ENCODE measurements at regions of chr2 and their contacts with region 1.

Region 1: GRCh38 chr2:191150600-191151330 is at the start of gene STAT4:
- DNase-seq: peak; percentile 96
- ATAC-seq: peak; percentile 86
- H3K4me3 Mint-ChIP-seq: peak within 1 kb of the TSS; percentile 86
- H3K27ac Mint-ChIP-seq: peak within 1 kb of the TSS; percentile 87
- H3K4me1 Mint-ChIP-seq: peaks cover 68% of the 10 kb centered on the region
- H3K27me3 Mint-ChIP-seq: no peaks in the 10 kb centered on the region
- CTCF ChIP-seq: no peak
- total RNA-seq, gene STAT4: 70.8 to 72.2 TPM

Region 2: DNA sequence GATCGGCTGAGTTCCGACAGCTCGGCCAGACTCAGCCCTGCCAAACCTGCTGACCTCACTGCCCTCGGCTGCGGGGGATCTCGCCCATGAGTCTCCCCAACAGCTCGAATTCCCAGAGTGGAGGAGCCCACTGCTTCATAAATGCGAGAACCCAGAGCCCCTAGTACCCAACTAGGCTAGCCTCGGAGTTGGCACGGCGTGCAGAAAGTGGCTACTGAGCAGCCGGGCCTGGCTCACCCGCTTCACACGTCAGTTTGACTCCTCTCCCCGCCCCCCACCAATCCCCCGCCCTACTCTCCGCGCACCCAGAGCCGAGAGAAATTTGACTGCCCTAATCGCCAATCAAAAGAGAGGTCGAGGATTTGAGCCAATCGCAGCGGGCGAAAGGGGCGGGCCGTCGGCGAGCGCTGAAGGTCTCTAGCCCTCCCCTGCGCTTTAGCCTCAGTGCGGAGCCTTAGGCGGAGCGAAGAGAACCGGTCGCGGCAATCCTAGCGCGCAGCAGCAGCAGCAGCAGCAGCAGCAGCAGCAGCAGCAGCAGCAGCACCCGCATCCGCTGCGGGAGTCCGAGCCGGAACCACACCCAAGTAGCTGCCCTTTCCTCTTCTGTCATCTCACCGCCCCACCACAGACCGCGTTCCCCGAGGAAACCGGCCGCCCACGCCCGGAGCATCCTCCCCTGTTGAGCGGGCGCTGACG is 270.2 kb before region 1 on chr2 and contains the start of gene GLS:
- CTCF ChIA-PET with region 1: interaction called, 3 read pairs
- POLR2A ChIA-PET with region 1: interaction called, 8 read pairs
- intact Hi-C with region 1: loop called (anchors 5 kb)
- DNase-seq: peak; percentile 97
- ATAC-seq: peak; percentile 81
- H3K4me3 Mint-ChIP-seq: peak within 1 kb of the TSS; percentile 94
- H3K27ac Mint-ChIP-seq: peak within 1 kb of the TSS; percentile 99
- H3K4me1 Mint-ChIP-seq: peaks cover 36% of the 10 kb centered on the region
- H3K27me3 Mint-ChIP-seq: no peaks in the 10 kb centered on the region
- CTCF ChIP-seq: no peak
- total RNA-seq, gene GLS: 218 to 227 TPM

Region 3: DNA sequence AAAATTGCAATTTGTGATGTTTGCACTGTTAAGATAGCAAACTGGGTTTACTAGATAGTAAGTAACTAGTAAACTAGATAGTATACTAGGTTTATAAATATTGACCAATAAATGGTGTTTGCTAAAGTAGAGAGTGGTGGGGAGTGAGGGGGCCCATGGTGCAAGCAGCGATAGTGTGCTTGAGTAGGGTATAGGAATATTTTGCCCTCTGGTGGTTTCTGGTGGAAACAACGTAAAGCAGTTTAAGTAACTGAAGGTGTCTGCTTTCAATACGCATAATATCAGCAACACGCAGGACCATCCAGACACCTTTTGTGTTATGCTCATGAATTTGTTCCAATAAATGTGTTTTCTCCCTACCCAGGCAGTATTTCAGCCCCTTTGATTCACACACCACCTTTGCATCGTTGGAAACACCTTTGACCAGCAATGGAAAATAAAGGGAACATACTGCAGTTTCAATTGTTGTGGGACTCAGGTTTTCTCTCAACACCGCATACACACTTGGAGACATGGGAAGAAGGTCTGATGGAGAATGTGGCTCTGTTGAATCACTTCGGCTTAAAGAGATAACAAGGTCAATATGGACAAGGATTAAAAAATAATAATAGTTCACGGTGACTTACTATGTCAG is 120.1 kb before region 1 on chr2:
- CTCF ChIA-PET with region 1: interaction called, 17 read pairs
- POLR2A ChIA-PET with region 1: interaction called, 3 read pairs
- intact Hi-C with region 1: no loop called
- DNase-seq: peak; percentile 59
- ATAC-seq: peak; percentile 78
- H3K4me3 Mint-ChIP-seq: no peak overlapping the region
- H3K27ac Mint-ChIP-seq: peak overlapping the region; percentile 66
- H3K4me1 Mint-ChIP-seq: peaks cover 45% of the 10 kb centered on the region
- H3K27me3 Mint-ChIP-seq: no peaks in the 10 kb centered on the region
- CTCF ChIP-seq: peak; percentile 73

Region 4: DNA sequence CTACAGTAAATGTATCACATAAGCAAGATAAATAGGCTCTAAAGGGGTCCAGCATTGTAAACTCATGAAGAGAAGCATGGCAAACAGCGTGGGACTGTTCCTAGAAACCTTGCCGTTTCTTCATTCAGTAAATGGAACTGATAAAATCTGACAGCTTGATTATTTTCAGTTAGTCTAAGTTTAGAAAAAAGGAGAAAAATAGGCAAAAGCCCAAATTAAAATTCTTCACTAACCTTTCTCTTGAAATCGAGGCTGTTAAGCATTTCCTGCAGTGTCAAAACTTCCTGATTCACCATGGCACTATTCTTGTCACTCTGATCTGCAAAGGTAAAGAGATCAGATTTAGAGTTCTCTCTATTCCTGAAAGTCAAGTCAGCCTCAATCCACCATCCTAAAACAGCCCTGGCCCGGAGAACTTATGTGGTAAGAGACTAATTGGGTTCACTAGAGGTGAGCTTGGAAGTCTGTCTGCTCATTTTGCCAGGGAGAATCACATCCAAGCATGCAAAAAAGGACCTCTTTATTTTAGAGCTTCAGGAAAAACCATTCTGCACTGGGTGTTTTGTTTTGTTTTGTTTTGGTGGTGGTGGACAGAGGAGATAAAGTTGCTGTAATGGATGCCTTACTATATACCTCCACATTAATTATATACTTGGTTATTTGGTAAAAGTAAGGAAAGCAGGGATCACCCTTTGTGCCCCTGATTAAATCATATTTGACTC is 84.4 kb before region 1 on chr2:
- CTCF ChIA-PET with region 1: interaction called, 48 read pairs
- POLR2A ChIA-PET with region 1: interaction called, 43 read pairs
- intact Hi-C with region 1: no loop called
- DNase-seq: peak; percentile 24
- ATAC-seq: peak; percentile 40
- H3K4me3 Mint-ChIP-seq: peak overlapping the region; percentile 84
- H3K27ac Mint-ChIP-seq: peak overlapping the region; percentile 79
- H3K4me1 Mint-ChIP-seq: peaks cover 82% of the 10 kb centered on the region
- H3K27me3 Mint-ChIP-seq: no peaks in the 10 kb centered on the region
- CTCF ChIP-seq: no peak

Region 5: DNA sequence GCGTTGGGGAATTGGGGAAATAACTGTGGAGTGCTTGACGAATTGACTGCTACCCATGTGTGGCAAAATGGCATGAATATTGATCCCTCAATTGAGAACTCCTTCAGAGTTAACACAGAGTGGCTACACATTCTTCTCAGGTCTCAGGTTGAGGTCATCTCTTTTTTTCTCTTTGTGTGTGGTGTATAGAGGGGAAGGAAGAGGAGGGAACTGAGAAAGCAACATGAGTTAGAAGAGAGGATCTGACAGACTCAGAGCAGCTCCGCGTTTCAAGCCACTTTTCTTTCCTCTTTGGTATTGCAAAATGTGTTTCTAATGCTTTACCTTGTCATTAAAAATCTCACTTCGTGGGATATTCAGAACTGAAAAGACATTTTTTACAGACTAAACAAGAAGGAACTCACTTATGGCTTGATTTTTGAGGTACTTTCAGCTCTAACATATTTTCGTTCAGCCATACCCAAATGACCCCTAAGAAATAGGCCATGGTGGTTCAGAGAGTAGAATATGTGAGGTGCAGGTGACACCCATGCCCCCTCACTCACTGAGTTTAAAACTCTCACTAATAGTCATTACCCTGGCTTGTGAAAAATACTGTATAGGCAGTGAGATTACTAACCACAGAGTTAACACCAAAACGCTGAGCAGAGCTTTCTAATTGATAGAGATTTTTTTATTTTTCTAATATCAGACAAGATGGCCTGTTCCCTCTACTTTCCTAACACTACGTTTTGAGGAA is 22.4 kb before region 1 on chr2:
- CTCF ChIA-PET with region 1: interaction called, 12 read pairs
- POLR2A ChIA-PET with region 1: interaction called, 8 read pairs
- intact Hi-C with region 1: no loop called
- DNase-seq: no peak
- ATAC-seq: peak; percentile 84
- H3K4me3 Mint-ChIP-seq: peak overlapping the region; percentile 65
- H3K27ac Mint-ChIP-seq: peak overlapping the region; percentile 82
- H3K4me1 Mint-ChIP-seq: peaks cover 72% of the 10 kb centered on the region
- H3K27me3 Mint-ChIP-seq: no peaks in the 10 kb centered on the region
- CTCF ChIP-seq: no peak

Region 6: DNA sequence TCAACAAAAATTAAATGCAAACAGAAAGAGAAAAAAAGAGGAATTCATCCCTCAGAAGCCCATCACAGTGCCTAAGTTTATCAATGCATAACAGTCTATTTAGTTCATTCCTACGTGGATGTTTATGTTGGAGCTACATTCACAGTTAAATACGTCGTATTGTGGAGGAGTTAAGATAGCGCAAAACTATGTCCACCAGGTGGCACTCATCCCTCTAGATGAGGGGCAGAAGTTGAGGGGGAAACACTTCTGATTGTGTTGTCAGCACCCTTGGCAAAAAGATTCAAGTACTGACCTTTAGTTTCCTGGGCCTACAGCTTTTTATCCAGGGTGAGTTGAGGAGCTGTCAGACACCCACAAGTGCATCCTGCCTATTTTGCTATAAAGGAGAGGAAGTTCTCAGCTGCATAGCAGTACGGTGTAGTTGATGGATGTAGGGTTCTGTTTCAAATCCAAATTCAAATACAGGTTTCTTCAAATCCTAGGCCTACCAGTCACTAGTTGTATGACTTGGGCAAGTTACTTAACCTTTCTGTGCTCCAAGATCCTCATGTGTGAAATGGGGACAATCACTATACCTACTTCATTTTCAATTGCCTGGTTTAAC is 67.6 kb after region 1 on chr2:
- CTCF ChIA-PET with region 1: interaction called, 13 read pairs
- POLR2A ChIA-PET with region 1: no interaction called
- intact Hi-C with region 1: no loop called
- DNase-seq: peak; percentile 85
- ATAC-seq: peak; percentile 90
- H3K4me3 Mint-ChIP-seq: no peak overlapping the region
- H3K27ac Mint-ChIP-seq: no peak overlapping the region
- H3K4me1 Mint-ChIP-seq: peaks cover 29% of the 10 kb centered on the region
- H3K27me3 Mint-ChIP-seq: no peaks in the 10 kb centered on the region
- CTCF ChIP-seq: peak; percentile 74